Psoas muscle (tissue), 8 donors: ENCODE measurements at regions of chr4 and their contacts with region 1.

Region 1: GRCh38 chr4:118280501-118281218 is 72.1 kb downstream of the PRSS12 start:
- DNase-seq: no peak
- ATAC-seq: peak in 3 of 4 donors; percentile 34 to 37 (median 34)
- H3K4me3 ChIP-seq: peak overlapping the region; percentile 91
- H3K27ac ChIP-seq: peak overlapping the region; percentile 96
- H3K4me1 ChIP-seq: peaks cover 22% of the 10 kb centered on the region
- H3K27me3 ChIP-seq: no peaks in the 10 kb centered on the region
- CTCF ChIP-seq: peak; percentile 52

Region 2: GRCh38 chr4:117831060-117831683 is 449.5 kb before region 1 on chr4:
- intact Hi-C with region 1: no loop called
- DNase-seq: no peak
- ATAC-seq: no peak
- H3K4me3 ChIP-seq: no peak overlapping the region
- H3K27ac ChIP-seq: no peak overlapping the region
- H3K4me1 ChIP-seq: no peaks in the 10 kb centered on the region
- H3K27me3 ChIP-seq: no peaks in the 10 kb centered on the region
- CTCF ChIP-seq: no peak

Region 3: GRCh38 chr4:118158763-118159375 is 121.8 kb before region 1 on chr4:
- intact Hi-C with region 1: no loop called
- DNase-seq: no peak
- ATAC-seq: no peak
- H3K4me3 ChIP-seq: no peak overlapping the region
- H3K27ac ChIP-seq: no peak overlapping the region
- H3K4me1 ChIP-seq: no peaks in the 10 kb centered on the region
- H3K27me3 ChIP-seq: no peaks in the 10 kb centered on the region
- CTCF ChIP-seq: no peak

Region 4: DNA sequence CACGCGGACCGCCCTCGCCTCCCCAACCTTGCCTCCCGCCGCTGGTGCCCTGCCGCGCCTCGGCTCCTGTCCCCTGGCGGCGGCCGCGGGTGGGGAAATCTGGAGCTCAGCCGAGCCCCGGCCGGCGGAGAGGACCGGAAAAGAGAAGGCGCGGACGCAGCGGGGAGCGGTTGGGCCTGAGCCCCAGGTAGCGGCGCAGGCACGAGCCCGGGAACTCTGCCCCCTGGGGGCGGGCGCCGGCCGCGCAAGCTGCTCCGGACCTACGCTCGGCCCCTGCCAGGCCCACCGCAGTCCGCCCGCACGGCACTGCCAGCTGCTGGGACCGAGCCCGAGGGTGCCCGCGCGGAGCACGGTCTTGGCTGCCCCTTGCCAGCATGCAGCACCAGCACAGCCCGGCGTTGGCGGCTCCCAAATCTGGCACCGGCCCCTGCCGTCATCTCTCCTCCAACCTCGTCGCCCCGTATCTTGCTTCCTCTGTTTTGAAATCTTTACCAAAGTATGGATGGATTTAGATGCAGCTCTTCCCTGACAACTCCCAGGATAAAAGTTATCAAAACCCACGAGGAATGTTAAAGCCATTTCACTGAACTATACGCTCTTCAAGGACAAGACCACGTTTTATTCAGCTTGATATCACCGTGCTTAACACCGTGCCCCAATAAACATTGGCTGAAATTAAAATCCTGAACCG is 72.3 kb after region 1 on chr4 and contains the start of gene PRSS12:
- intact Hi-C with region 1: loop called in 1 of 2 experiments (anchors 5 kb)
- DNase-seq: peak; percentile 60 to 72
- ATAC-seq: peak; percentile 82 to 92 (median 86)
- H3K4me3 ChIP-seq: peak within 1 kb of the TSS; percentile 62
- H3K27ac ChIP-seq: no peak within 1 kb of the TSS
- H3K4me1 ChIP-seq: no peaks in the 10 kb centered on the region
- H3K27me3 ChIP-seq: peaks cover 0 to 63% (median 15%) of the 10 kb centered on the region in 3 donors
- CTCF ChIP-seq: peak; percentile 56
- total RNA-seq, gene PRSS12: 0.06 to 0.49 (median 0.18) TPM

Region 5: DNA sequence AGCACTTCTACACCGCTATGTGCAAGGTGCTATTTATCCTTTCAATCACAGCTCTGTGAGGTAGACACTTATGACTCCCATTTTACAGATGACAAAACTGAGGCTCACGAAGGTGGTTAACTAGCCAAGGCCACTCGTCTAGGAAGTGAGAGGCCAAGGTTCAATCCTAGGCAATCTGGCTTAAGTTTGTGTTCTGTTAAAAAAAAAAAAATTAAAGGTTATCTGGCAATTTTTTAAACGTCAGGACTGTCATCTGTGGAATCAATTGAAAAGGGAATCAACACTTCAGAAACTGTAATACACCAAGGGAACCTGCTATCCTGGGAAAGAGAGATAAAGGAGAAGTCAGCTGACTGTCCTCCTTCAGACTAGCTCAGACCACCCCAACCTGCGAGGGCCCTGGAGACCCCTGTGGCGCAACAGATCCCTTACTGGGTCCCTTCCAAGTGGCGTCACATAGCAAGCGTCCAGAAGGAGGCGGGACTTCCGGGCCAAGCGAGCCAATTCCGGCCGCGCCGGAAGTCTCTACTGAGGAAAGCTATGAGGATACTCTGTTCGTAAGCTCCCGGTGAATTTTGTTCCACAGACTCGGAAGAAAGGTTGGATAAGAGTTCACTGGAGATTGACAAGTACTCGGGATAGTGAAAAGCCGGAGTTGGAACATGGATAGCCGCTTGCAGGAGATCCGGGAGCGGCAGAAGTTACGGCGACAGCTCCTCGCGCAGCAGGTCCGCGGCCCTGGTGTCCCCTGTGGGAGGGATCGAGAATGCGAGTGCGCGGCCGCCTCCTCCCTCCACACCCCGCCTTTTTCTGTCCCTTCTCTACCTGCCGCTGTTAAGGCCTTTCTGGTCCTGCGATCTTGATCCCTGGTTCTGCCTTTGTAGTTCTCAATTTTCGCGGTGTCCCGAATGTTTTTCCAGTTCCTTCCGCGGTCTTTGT is 404.5 kb after region 1 on chr4 and contains the start of gene METTL14:
- intact Hi-C with region 1: loop called in 1 of 2 experiments (anchors 5 kb)
- DNase-seq: peak; percentile 92 to 96
- ATAC-seq: peak; percentile 97 to 99 (median 98)
- H3K4me3 ChIP-seq: peak within 1 kb of the TSS; percentile 88
- H3K27ac ChIP-seq: peak within 1 kb of the TSS; percentile 94
- H3K4me1 ChIP-seq: peaks cover 18% of the 10 kb centered on the region
- H3K27me3 ChIP-seq: no peaks in the 10 kb centered on the region
- CTCF ChIP-seq: peak; percentile 15
- total RNA-seq, gene METTL14: 19.3 to 32.5 (median 21.2) TPM